HCT116 (cell line): ENCODE measurements at regions of chr14 and their contacts with region 1.

Region 1: GRCh38 chr14:96362965-96363756 is at the starts of genes ATG2B and GSKIP:
- DNase-seq: peak; percentile 83
- ATAC-seq: peak; percentile 82
- H3K4me3 ChIP-seq: peak within 1 kb of the TSS; percentile 85 to 92
- H3K27ac ChIP-seq: peak within 1 kb of the TSS; percentile 58; the same call in 1 of the 2 replicates
- H3K4me1 ChIP-seq: peaks cover 11 to 24% of the 10 kb centered on the region in 2 experiments; a peak in 2 of 4 replicates
- H3K27me3 ChIP-seq: no peaks in the 10 kb centered on the region
- CTCF ChIP-seq: no peak
- POLR2A ChIP-seq: peak; percentile 46
- RAD21 ChIP-seq: no peak
- total RNA-seq, gene ATG2B: 6.4 TPM
- total RNA-seq, gene GSKIP: 21.7 TPM

Region 2: GRCh38 chr14:96239759-96240158 is 123.4 kb before region 1 on chr14:
- CTCF ChIA-PET with region 1: no interaction called
- POLR2A ChIA-PET with region 1: no interaction called
- RAD21 ChIA-PET with region 1: no interaction called
- intact Hi-C with region 1: no loop called
- DNase-seq: no peak
- ATAC-seq: no peak
- H3K4me3 ChIP-seq: no peak overlapping the region
- H3K27ac ChIP-seq: no peak overlapping the region
- H3K4me1 ChIP-seq: no peaks in the 10 kb centered on the region
- H3K27me3 ChIP-seq: no peaks in the 10 kb centered on the region; the same call in 1 of the 2 replicates
- CTCF ChIP-seq: no peak
- POLR2A ChIP-seq: no peak
- RAD21 ChIP-seq: no peak

Region 3: DNA sequence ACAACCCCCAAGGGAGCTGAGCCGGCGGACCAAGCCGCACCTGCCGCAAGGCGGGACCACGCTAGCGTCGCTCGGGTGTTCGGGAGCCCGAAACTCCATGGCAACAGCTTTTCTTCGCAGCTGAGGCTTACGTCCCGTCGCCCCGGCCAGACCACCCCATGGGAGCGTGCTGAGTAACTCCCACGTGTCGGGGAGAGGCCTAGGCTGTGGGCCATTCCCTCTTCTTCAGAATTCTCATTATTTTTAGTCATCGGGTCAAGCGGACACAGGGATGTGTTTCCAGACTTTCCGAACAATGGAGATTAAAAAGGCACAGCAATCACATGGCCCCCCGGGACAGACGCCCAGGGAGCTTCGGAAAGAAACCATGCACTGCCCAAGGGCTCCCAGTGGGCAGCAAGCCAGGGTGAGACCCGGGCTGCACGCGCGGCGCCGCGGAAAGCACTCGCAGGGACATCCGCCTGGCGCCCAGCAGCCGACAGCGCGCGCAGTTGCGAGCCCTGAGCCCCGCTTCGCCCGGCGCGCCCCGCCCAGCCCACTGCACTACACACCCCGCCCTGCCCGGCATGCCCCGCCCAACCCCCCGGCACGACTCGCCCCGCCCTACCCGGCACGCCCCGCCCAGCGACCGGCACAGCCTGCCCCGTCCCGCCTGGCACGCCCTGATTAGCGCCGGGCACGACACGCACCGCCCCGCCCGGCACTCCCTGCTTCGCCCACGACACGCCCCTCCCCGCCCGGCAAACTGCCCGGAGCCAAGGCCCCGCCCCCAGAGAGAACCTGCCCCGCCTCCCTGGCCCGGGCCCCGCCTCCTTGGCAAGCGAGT is 28.3 kb after region 1 on chr14:
- CTCF ChIA-PET with region 1: no interaction called
- POLR2A ChIA-PET with region 1: no interaction called
- RAD21 ChIA-PET with region 1: no interaction called
- intact Hi-C with region 1: loop called (anchors 2 kb)
- DNase-seq: peak; percentile 85
- ATAC-seq: peak; percentile 93
- H3K4me3 ChIP-seq: peak overlapping the region; percentile 79 to 97
- H3K27ac ChIP-seq: peak overlapping the region; percentile 4; the same call in 1 of the 2 replicates
- H3K4me1 ChIP-seq: peaks cover 7 to 22% of the 10 kb centered on the region in 2 experiments; a peak in 3 of 4 replicates
- H3K27me3 ChIP-seq: no peaks in the 10 kb centered on the region
- CTCF ChIP-seq: no peak
- POLR2A ChIP-seq: peak; percentile 66
- RAD21 ChIP-seq: no peak